ENCODE measurements at regions of chr3 and their contacts with region 1.

Region 1: DNA sequence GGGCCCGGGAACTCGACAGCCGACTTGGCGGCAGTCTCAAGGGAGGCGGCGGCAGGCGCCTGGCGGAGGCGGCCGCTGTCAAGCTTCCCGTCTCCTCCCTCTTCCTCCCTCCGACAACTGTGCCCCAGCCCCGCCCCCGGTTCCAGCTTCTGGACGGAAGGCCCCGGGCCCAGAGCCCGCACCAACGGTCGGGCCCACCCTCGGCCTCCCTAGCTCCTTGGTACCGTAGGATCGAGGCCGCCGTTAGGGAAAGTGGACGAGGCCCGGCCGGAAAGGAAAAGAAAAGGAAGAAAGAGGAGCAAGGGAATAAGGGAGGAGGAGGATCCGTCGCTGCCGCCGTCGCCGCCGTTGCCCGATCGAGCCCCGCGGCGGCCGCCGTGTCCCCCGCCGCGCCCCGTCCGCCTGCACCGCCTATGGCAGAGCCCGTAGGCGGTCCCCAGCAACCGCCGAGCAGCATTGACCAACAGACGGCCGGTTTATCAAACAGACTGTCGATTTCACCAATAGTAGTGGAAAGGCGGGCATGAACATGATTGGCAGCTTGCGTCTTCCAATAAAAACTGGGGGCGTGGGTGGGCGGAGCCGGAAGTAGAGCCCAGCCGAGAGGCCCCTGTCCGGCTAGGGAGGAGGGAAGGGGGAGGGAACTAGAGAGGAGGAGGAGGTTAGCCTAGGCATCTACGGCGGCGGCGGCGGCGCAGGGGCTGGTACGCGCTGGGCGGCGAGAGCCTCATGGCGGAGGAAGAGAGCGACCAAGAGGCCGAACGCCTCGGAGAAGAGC is at the starts of genes CGGBP1 and ZNF654:
- DNase-seq: peak; percentile 95 to 100 (median 99)
- ATAC-seq: peak; percentile 94
- H3K4me3 ChIP-seq: peak within 1 kb of the TSS; percentile 87
- H3K4me3 Mint-ChIP-seq: peak within 1 kb of the TSS; percentile 95 to 100 (median 98)
- H3K27ac ChIP-seq: peak within 1 kb of the TSS; percentile 81
- H3K27ac Mint-ChIP-seq: peak within 1 kb of the TSS; percentile 90 to 99 (median 96)
- H3K4me1 ChIP-seq: peaks cover 16 to 28% of the 10 kb centered on the region in 2 donors
- H3K4me1 Mint-ChIP-seq: peaks cover 47 to 73% (median 63%) of the 10 kb centered on the region in 7 donors
- H3K27me3 ChIP-seq: no peaks in the 10 kb centered on the region
- H3K27me3 Mint-ChIP-seq: no peaks in the 10 kb centered on the region
- total RNA-seq, gene CGGBP1: 87.0 to 153 (median 115) TPM
- total RNA-seq, gene ZNF654: 11.4 to 32.2 (median 25.4) TPM

Region 2: DNA sequence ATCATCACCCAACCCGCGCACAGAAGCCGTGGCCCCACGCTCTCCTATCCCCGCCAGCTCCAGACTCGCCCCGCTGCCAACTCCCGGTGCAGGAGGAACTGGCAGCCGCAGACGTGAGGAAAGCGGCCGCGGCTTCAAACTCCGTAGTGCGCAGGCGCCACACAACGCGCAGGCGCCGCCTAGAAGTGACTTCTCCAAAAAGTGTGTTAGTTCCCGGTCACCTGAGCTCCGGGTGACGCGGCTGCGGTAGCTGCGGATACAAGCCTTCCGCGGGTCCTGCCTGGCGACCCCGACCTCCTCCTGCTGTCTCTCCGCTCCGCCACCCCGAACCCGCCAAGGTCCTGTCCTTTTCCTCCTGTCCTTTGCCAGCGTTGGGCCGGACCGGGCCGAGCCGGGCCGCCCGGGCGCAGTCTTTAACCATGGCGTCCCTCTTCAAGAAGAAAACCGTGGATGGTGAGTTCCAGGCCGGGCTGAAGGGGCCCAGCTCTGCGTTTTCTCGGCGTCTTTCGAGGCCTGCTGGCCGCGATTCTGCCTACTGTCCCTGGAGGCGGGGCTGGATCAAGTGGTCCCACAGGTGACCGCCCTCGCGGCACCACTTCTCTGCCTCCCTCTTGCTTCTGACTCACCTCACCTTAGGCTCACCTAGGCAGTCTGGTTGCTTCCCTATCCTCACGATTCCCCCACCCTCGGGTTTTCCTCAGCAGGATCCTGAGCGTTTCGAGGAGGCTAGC is 831.5 kb before region 1 on chr3 and contains the start of gene CHMP2B:
- CTCF ChIA-PET with region 1: no interaction called
- POLR2A ChIA-PET with region 1: no interaction called
- intact Hi-C with region 1: loop called (anchors 1 kb)
- DNase-seq: peak; percentile 86 to 91 (median 89)
- ATAC-seq: peak; percentile 94
- H3K4me3 ChIP-seq: peak within 1 kb of the TSS; percentile 81
- H3K4me3 Mint-ChIP-seq: peak within 1 kb of the TSS; percentile 91 to 99 (median 98)
- H3K27ac ChIP-seq: peak within 1 kb of the TSS; percentile 95
- H3K27ac Mint-ChIP-seq: peak within 1 kb of the TSS; percentile 96 to 99 (median 98)
- H3K4me1 ChIP-seq: peaks cover 12 to 17% of the 10 kb centered on the region in 2 donors
- H3K4me1 Mint-ChIP-seq: peaks cover 26 to 61% (median 42%) of the 10 kb centered on the region in 7 donors
- H3K27me3 ChIP-seq: no peaks in the 10 kb centered on the region
- H3K27me3 Mint-ChIP-seq: peaks cover 7 to 28% (median 8%) of the 10 kb centered on the region in 5 donors
- total RNA-seq, gene CHMP2B: 20.7 to 27.4 (median 23.4) TPM

Region 3: GRCh38 chr3:87771341-87772192 is 287.2 kb before region 1 on chr3:
- CTCF ChIA-PET with region 1: no interaction called
- POLR2A ChIA-PET with region 1: interaction called, 3 read pairs
- intact Hi-C with region 1: loop called in 1 of 2 experiments (anchors 5 kb)
- DNase-seq: peak in 7 of 9 donors; percentile 14 to 51 (median 39)
- ATAC-seq: peak; percentile 83
- H3K4me3 ChIP-seq: no peak overlapping the region
- H3K4me3 Mint-ChIP-seq: no peak overlapping the region
- H3K27ac ChIP-seq: no peak overlapping the region
- H3K27ac Mint-ChIP-seq: no peak overlapping the region
- H3K4me1 ChIP-seq: no peaks in the 10 kb centered on the region
- H3K4me1 Mint-ChIP-seq: peaks cover 0 to 2% (median 0%) of the 10 kb centered on the region in 7 donors
- H3K27me3 ChIP-seq: no peaks in the 10 kb centered on the region
- H3K27me3 Mint-ChIP-seq: peaks cover 0 to 30% (median 19%) of the 10 kb centered on the region in 5 donors

Region 4: GRCh38 chr3:88019024-88019423 is 39.8 kb before region 1 on chr3:
- CTCF ChIA-PET with region 1: no interaction called
- POLR2A ChIA-PET with region 1: no interaction called
- intact Hi-C with region 1: loop called (anchors 5 kb)
- DNase-seq: no peak
- ATAC-seq: peak; percentile 63
- H3K4me3 ChIP-seq: no peak overlapping the region
- H3K4me3 Mint-ChIP-seq: peak overlapping the region in 1 of 10 donors; percentile 13
- H3K27ac ChIP-seq: no peak overlapping the region
- H3K27ac Mint-ChIP-seq: no peak overlapping the region
- H3K4me1 ChIP-seq: peaks cover 0 to 14% of the 10 kb centered on the region in 2 donors
- H3K4me1 Mint-ChIP-seq: peaks cover 0 to 23% (median 11%) of the 10 kb centered on the region in 7 donors
- H3K27me3 ChIP-seq: no peaks in the 10 kb centered on the region
- H3K27me3 Mint-ChIP-seq: peaks cover 0 to 19% (median 5%) of the 10 kb centered on the region in 5 donors

Region 5: DNA sequence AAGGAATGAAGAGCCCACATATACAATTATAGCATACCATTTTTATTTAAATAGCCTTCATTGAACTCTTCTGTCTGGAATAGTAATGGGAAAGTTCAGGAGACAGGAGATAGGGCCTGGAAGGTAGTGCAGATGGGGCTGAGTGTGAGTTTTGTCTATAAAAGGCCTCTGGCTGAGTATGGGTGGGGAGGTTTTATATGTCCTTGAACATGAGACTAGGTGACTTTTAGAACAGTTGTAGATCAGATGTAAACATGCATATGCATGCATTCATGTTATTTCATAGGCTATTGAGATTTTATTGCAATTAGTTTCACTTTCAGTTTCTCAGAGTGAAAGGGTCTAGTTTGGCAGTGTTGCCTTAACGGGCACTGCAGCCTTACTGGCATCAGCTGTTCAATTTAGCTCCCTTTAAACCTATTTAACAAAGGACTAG is 27.1 kb before region 1 on chr3:
- CTCF ChIA-PET with region 1: no interaction called
- POLR2A ChIA-PET with region 1: interaction called, 25 read pairs
- intact Hi-C with region 1: loop called (anchors 1 kb)
- DNase-seq: peak in 7 of 9 donors; percentile 29 to 54 (median 38)
- ATAC-seq: peak; percentile 76
- H3K4me3 ChIP-seq: peak overlapping the region; percentile 59
- H3K4me3 Mint-ChIP-seq: peak overlapping the region; percentile 78 to 91 (median 86)
- H3K27ac ChIP-seq: peak overlapping the region; percentile 66
- H3K27ac Mint-ChIP-seq: peak overlapping the region; percentile 82 to 95 (median 88)
- H3K4me1 ChIP-seq: peaks cover 11 to 17% of the 10 kb centered on the region in 2 donors
- H3K4me1 Mint-ChIP-seq: peaks cover 10 to 50% (median 48%) of the 10 kb centered on the region in 7 donors
- H3K27me3 ChIP-seq: no peaks in the 10 kb centered on the region
- H3K27me3 Mint-ChIP-seq: peaks cover 0 to under 1% (median 0%) of the 10 kb centered on the region in 5 donors

Region 6: DNA sequence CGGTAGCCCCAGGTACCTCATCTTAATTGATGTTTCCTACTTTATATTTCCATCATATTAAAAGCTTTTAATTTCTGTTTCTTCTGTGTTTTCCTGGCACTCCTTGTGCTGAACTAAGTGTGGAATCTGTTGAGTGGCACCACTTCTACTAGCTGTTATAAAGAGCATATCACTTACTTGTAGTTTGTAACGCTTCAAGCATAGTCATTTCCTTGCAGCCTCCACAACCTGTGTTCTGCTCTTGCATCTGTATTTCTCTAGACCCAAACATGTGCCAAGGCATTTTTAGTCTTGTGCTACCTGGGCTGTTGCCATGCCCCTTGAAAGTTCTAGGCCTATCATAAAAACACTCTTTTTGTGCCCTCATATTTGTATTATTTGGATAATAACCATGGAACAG is 16.3 kb after region 1 on chr3:
- CTCF ChIA-PET with region 1: no interaction called
- POLR2A ChIA-PET with region 1: interaction called, 8 read pairs
- intact Hi-C with region 1: loop called in 1 of 2 experiments (anchors 2 kb)
- DNase-seq: no peak
- ATAC-seq: no peak
- H3K4me3 ChIP-seq: no peak overlapping the region
- H3K4me3 Mint-ChIP-seq: peak overlapping the region in 3 of 10 donors; percentile 6 to 16 (median 16)
- H3K27ac ChIP-seq: no peak overlapping the region
- H3K27ac Mint-ChIP-seq: peak overlapping the region in 4 of 9 donors; percentile 0 to 27 (median 15)
- H3K4me1 ChIP-seq: peaks cover 0 to 16% of the 10 kb centered on the region in 2 donors
- H3K4me1 Mint-ChIP-seq: peaks cover 30 to 88% (median 75%) of the 10 kb centered on the region in 7 donors
- H3K27me3 ChIP-seq: no peaks in the 10 kb centered on the region
- H3K27me3 Mint-ChIP-seq: no peaks in the 10 kb centered on the region

Region 7: DNA sequence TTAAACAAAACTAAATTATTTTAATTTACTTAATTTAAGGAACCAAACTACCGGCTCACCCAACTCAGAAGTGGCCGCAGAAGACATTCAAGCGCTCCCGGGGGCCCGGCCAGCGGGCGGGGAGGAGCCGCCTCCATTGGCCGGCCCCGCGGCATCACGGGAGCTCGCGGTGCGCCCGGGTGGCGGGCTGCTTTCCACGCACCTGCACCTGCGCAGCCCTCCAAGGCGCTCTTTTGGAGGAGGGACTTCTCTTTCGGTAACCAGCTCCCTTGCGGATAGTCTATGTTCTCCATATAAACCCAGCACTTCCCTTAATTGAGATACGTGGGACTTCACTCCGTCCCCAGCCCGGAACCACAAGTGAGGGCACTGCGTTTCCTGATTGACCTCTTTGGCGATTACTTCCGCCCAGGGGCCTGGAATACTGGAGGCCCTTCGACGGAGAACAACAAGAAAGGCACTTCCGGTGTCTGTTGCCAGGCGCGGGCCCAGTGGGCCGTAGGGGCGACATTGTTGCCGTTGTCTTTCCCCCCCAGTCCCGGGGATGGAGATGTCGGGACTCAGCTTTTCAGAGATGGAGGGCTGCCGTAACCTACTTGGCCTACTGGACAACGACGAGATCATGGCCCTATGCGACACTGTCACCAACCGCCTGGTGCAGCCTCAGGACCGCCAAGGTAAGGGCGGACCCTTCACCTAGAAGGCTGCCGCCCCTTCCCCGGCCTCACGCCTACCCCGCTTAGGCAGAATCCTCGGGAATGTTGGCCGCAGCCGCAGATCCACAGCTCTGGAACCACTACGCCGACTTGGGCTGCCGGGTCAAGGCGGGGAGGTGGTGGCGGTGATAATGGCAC is 91.0 kb after region 1 on chr3 and contains the start of gene C3orf38:
- CTCF ChIA-PET with region 1: no interaction called
- POLR2A ChIA-PET with region 1: interaction called, 72 read pairs
- intact Hi-C with region 1: loop called (anchors 1 kb)
- DNase-seq: peak; percentile 74 to 88 (median 85)
- ATAC-seq: peak; percentile 96
- H3K4me3 ChIP-seq: peak within 1 kb of the TSS; percentile 88
- H3K4me3 Mint-ChIP-seq: peak within 1 kb of the TSS; percentile 93 to 99 (median 98)
- H3K27ac ChIP-seq: peak within 1 kb of the TSS; percentile 94
- H3K27ac Mint-ChIP-seq: peak within 1 kb of the TSS; percentile 97 to 99 (median 99)
- H3K4me1 ChIP-seq: peaks cover 13 to 17% of the 10 kb centered on the region in 2 donors
- H3K4me1 Mint-ChIP-seq: peaks cover 16 to 46% (median 43%) of the 10 kb centered on the region in 7 donors
- H3K27me3 ChIP-seq: no peaks in the 10 kb centered on the region
- H3K27me3 Mint-ChIP-seq: no peaks in the 10 kb centered on the region
- total RNA-seq, gene C3orf38: 28.9 to 40.2 (median 34.7) TPM

Measured in naive thymus-derived CD4-positive, alpha-beta T cell (primary cell).